ENCODE measurements at regions of chr2 and their contacts with region 1.

Region 1: GRCh38 chr2:39513641-39514094 is 76.6 kb upstream of the MAP4K3 start:
- DNase-seq: peak; percentile 66
- H3K4me3 ChIP-seq: no peak overlapping the region
- H3K27ac ChIP-seq: peak overlapping the region; percentile 78 to 83 (median 80)
- H3K4me1 ChIP-seq: peaks cover 0 to 86% (median 77%) of the 10 kb centered on the region in 4 donors
- H3K27me3 ChIP-seq: no peaks in the 10 kb centered on the region
- CTCF ChIP-seq: peak in 3 of 4 experiments; percentile 33 to 55 (median 34)
- EP300 ChIP-seq: no peak
- POLR2A ChIP-seq: no peak

Region 2: GRCh38 chr2:39124000-39124745 is 389.5 kb before region 1 on chr2:
- intact Hi-C with region 1: loop called (anchors 10 kb)
- DNase-seq: peak; percentile 97
- H3K4me3 ChIP-seq: peak overlapping the region; percentile 57 to 73 (median 64)
- H3K27ac ChIP-seq: peak overlapping the region; percentile 91 to 97 (median 96)
- H3K4me1 ChIP-seq: peaks cover 0 to 33% (median 25%) of the 10 kb centered on the region in 4 donors
- H3K27me3 ChIP-seq: no peaks in the 10 kb centered on the region
- CTCF ChIP-seq: peak in 2 of 4 experiments; percentile 23 to 53
- EP300 ChIP-seq: peak in 1 of 4 donors; percentile 78
- POLR2A ChIP-seq: peak; percentile 83 to 91

Region 3: DNA sequence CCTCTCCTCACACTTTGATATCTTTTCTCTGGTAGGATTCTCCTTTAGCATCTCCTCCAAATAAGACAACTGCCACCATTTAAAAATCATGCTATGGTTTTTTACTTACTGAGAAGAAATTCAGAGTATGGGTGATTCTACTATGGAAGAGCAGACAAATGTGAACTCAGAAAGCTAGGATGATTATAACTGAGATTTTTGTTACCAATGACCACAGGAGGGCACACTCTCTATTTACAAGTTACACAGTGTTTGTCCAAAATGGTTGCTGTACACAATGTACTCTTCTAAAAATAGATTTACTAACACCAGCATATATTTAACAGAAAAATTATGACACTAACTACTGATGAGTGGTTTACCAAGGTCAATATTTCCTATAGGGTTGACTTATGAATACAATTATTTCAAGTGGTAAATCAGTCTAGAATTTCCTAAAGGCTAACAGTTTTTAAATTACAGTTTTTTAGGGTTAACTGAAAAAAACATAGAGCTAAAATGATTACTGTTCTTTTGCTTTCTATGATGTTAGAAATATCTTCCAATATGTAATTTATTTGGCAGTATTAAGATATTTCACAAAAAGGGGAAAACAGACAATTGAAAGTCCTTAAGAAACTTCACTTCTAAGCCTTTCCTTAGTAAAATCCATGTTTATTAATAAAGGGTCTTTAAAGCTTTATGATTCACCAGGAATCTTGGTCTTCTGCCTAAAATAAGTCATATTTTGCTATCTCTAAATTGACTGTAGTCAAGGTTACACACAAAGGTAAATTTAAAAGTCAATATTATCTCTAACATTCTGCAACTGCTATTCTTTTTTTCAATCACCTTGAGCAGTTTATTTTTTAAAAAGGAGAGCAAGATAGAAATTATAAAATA is 133.8 kb before region 1 on chr2:
- intact Hi-C with region 1: loop called (anchors 5 kb)
- DNase-seq: no peak
- H3K4me3 ChIP-seq: no peak overlapping the region
- H3K27ac ChIP-seq: peak overlapping the region; percentile 9 to 74 (median 59)
- H3K4me1 ChIP-seq: peaks cover 0 to 57% (median 41%) of the 10 kb centered on the region in 4 donors
- H3K27me3 ChIP-seq: no peaks in the 10 kb centered on the region
- CTCF ChIP-seq: peak in 3 of 4 experiments; percentile 55 to 57 (median 57)
- EP300 ChIP-seq: peak in 2 of 4 donors; percentile 39 to 81
- POLR2A ChIP-seq: no peak

Region 4: GRCh38 chr2:39436592-39437510 is 76.8 kb before region 1 on chr2 and contains the start of gene MAP4K3:
- intact Hi-C with region 1: loop called (anchors 2 kb)
- DNase-seq: peak; percentile 97
- H3K4me3 ChIP-seq: peak within 1 kb of the TSS; percentile 90 to 97 (median 93)
- H3K27ac ChIP-seq: peak within 1 kb of the TSS; percentile 96 to 99 (median 98)
- H3K4me1 ChIP-seq: peaks cover 0 to 57% (median 54%) of the 10 kb centered on the region in 4 donors
- H3K27me3 ChIP-seq: no peaks in the 10 kb centered on the region
- CTCF ChIP-seq: no peak
- EP300 ChIP-seq: no peak
- POLR2A ChIP-seq: peak; percentile 70 to 79
- total RNA-seq, gene MAP4K3: 72.1 to 96.8 (median 77.4) TPM

Region 5: GRCh38 chr2:39696838-39697237 is 183.2 kb after region 1 on chr2:
- intact Hi-C with region 1: loop called (anchors 5 kb)
- DNase-seq: no peak
- H3K4me3 ChIP-seq: no peak overlapping the region
- H3K27ac ChIP-seq: peak overlapping the region; percentile 11 to 61 (median 44)
- H3K4me1 ChIP-seq: peaks cover 0 to 17% (median 15%) of the 10 kb centered on the region in 4 donors
- H3K27me3 ChIP-seq: no peaks in the 10 kb centered on the region
- CTCF ChIP-seq: peak in 3 of 4 experiments; percentile 25 to 38 (median 26)
- EP300 ChIP-seq: no peak
- POLR2A ChIP-seq: no peak

Region 6: DNA sequence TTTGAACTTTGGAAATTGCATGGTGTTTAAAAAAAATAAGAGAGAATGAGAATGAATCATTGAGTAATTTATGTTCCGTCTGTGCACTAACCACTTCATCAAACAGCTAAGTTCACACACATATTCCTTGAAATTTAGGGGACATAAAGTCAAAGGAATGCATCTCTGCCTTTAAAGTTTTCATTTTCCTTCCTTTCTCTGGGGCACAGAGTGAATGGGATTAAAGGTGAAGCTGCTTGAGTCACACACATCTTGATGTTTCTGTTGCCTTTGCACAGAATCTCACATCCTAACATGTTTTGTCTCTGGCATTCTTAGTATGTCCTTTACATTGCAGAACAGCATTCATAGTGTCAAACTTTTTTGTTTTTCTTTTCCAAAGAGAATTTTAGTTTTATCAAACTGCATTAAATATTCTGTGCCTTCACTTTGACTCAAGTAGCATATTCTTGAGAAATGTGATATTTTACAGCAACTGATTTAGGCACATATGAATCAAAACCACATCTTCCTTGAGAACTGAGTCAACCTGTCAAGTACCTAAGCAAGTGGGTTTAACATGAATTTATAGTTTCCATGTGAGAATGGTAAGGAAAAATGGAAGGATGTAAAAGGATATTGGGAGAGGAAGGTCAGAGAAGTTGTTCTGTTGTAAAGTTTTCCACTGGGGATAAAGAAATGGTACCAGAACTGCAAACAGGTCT is 434.5 kb after region 1 on chr2:
- intact Hi-C with region 1: no loop called
- DNase-seq: no peak
- H3K4me3 ChIP-seq: no peak overlapping the region
- H3K27ac ChIP-seq: no peak overlapping the region
- H3K4me1 ChIP-seq: no peaks in the 10 kb centered on the region
- H3K27me3 ChIP-seq: no peaks in the 10 kb centered on the region
- CTCF ChIP-seq: no peak
- EP300 ChIP-seq: no peak
- POLR2A ChIP-seq: no peak

Measured in sigmoid colon (tissue), 7 donors.